Activated CD4-positive, alpha-beta T cell treated with anti-CD3 and anti-CD28 coated beads for 36 hours (primary cell): ENCODE measurements at regions of chr17 and their contacts with region 1.

Region 1: DNA sequence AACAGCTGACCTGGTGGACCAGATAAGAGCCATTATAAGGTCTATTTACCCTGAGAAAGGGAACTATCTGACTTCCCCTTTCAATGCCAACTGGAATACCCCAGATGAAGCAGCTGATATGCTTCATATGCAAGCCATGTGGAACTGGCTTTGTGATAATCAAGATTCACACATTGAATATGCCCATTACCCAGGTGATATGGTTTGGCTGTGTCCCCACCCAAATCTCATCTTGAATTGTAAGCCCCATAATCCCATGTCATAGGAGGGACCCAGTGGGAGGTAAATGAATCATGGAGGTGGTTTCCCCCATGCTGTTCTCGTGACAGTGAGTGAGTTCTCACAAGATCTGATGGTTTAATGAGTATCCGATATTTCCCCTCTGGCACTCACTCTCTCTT is 42.1 kb downstream of the IKZF3 start:
- DNase-seq: peak; percentile 41
- ATAC-seq: peak; percentile 36
- H3K4me3 Mint-ChIP-seq: no peak overlapping the region
- H3K27ac Mint-ChIP-seq: peak overlapping the region; percentile 42
- H3K4me1 Mint-ChIP-seq: peaks cover 57% of the 10 kb centered on the region
- H3K27me3 Mint-ChIP-seq: no peaks in the 10 kb centered on the region

Region 2: GRCh38 chr17:39769974-39770587 is 52.0 kb before region 1 on chr17:
- CTCF ChIA-PET with region 1: interaction called, 3 read pairs
- POLR2A ChIA-PET with region 1: interaction called, 9 read pairs
- intact Hi-C with region 1: loop called (anchors 1 to 2 kb)
- DNase-seq: peak; percentile 78
- ATAC-seq: peak; percentile 80
- H3K4me3 Mint-ChIP-seq: peak overlapping the region; percentile 7
- H3K27ac Mint-ChIP-seq: peak overlapping the region; percentile 82
- H3K4me1 Mint-ChIP-seq: peaks cover 96% of the 10 kb centered on the region
- H3K27me3 Mint-ChIP-seq: no peaks in the 10 kb centered on the region

Region 3: DNA sequence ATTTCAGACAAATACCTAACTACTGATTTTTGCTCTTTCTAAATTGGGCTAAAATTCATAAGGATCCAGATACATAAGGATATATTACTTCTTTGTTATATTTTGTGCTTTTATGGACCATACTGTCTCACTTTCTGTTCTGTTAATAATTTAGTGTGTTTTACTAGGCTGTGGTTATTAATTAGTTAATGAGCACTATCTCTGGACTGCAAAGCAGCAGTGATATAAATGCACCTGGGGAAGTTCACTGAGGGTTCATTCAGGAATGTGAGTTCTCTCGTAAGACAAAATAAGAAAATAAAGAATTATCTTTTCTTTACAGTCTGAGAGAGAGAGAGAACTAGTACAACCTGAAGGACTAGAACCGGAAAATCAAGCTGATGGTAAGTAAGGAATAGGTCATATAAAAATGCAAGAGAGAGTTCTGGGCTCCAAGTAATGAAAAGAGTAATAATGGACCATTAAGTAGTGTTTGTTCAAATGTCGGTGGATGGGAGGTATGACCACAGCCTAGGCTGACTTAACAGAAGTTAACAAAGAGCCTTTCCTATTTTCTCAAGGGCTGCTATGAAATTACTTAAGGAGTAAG is 13.5 kb before region 1 on chr17:
- CTCF ChIA-PET with region 1: interaction called, 5 read pairs
- POLR2A ChIA-PET with region 1: interaction called, 10 read pairs
- intact Hi-C with region 1: no loop called
- DNase-seq: no peak
- ATAC-seq: no peak
- H3K4me3 Mint-ChIP-seq: no peak overlapping the region
- H3K27ac Mint-ChIP-seq: no peak overlapping the region
- H3K4me1 Mint-ChIP-seq: peaks cover 59% of the 10 kb centered on the region
- H3K27me3 Mint-ChIP-seq: no peaks in the 10 kb centered on the region

Region 4: DNA sequence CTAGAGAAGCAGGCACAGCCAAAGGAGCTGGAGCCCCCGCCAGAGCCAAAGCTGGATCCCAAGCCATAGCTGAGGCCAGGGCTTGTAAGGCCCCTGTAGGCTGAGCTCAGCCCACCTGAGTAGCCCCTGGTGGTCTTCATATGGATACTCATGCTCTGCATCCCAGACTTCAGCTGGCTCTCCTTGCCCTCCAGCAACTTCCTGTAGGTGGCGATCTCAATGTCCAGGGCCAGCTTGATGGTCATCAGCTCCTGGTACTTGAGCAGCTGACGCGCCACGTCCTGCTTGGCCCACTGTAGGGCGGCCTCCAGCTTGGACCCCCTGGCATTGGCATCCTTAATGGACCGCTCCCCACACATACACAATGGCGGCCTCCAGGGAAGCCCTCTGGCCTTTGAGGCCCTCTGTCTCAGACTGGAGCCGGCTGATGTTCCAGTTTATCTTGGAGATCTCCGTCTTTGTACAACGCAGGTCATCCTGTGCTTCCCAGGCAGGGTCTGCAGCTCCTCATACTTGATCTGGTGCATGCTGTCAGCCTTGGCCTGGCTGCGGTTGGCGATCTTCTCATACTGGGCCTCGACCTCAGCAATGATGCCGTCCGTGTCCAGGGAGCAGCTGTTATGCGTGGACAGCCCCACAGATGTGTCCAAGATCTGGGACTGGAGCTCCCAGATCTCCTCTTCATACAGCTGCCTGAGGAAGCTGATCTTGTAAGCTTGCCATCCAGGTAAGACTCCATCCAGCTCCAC is 13.2 kb after region 1 on chr17:
- CTCF ChIA-PET with region 1: interaction called, 5 read pairs
- POLR2A ChIA-PET with region 1: no interaction called
- intact Hi-C with region 1: loop called in 1 of 2 experiments (anchors 2 kb)
- DNase-seq: no peak
- ATAC-seq: no peak
- H3K4me3 Mint-ChIP-seq: no peak overlapping the region
- H3K27ac Mint-ChIP-seq: no peak overlapping the region
- H3K4me1 Mint-ChIP-seq: peaks cover 24% of the 10 kb centered on the region
- H3K27me3 Mint-ChIP-seq: no peaks in the 10 kb centered on the region